B cell (primary cell): ENCODE measurements at regions of chr15 and their contacts with region 1.

Region 1: DNA sequence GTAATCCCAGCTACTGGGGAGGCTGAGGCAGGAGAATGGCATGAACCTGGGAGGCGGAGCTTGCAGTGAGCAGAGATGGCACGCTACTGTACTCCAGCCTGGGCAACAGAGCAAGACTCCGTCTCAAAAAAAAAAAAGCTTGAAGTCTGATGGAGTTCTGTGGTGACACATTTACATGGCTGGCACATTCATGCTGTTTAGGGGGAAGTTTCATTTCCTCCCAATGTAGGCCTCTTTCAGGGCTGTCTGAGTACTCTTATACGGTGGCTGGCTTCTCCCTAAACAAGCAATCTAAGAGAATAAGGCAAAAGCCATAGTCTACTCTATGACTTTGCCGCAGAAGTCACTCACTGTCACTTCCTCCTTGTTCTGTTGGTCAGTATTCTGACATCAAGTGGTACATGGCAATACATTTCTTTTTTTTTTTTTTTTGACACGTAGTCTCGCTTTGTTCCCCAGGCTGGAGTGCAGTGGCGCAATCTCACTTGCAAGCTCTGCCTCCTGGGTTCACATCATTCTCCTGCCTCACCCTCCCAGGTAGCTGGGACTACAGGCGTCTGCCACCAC is 41.2 kb downstream of the OIP5 start:
- DNase-seq: peak; percentile 89
- ATAC-seq: peak; percentile 95
- H3K4me3 ChIP-seq: peak overlapping the region in 1 of 5 experiments; percentile 12
- H3K4me3 Mint-ChIP-seq: peak overlapping the region; percentile 68
- H3K27ac ChIP-seq: peak overlapping the region; percentile 73 to 91
- H3K27ac Mint-ChIP-seq: peak overlapping the region; percentile 93
- H3K4me1 ChIP-seq: peaks cover 24 to 35% of the 10 kb centered on the region in 2 donors
- H3K4me1 Mint-ChIP-seq: peaks cover 45% of the 10 kb centered on the region
- H3K27me3 ChIP-seq: no peaks in the 10 kb centered on the region
- H3K27me3 Mint-ChIP-seq: no peaks in the 10 kb centered on the region
- CTCF ChIP-seq: no peak

Region 2: GRCh38 chr15:41258706-41259471 is 32.3 kb before region 1 on chr15:
- CTCF ChIA-PET with region 1: no interaction called
- POLR2A ChIA-PET with region 1: no interaction called
- intact Hi-C with region 1: loop called (anchors 2 kb)
- DNase-seq: peak; percentile 73
- ATAC-seq: peak; percentile 96
- H3K4me3 ChIP-seq: peak overlapping the region in 2 of 5 experiments; percentile 12 to 13
- H3K4me3 Mint-ChIP-seq: peak overlapping the region; percentile 40
- H3K27ac ChIP-seq: peak overlapping the region; percentile 26 to 59
- H3K27ac Mint-ChIP-seq: peak overlapping the region; percentile 33
- H3K4me1 ChIP-seq: peaks cover 23 to 36% of the 10 kb centered on the region in 2 donors
- H3K4me1 Mint-ChIP-seq: peaks cover 28% of the 10 kb centered on the region
- H3K27me3 ChIP-seq: no peaks in the 10 kb centered on the region
- H3K27me3 Mint-ChIP-seq: no peaks in the 10 kb centered on the region
- CTCF ChIP-seq: no peak

Region 3: DNA sequence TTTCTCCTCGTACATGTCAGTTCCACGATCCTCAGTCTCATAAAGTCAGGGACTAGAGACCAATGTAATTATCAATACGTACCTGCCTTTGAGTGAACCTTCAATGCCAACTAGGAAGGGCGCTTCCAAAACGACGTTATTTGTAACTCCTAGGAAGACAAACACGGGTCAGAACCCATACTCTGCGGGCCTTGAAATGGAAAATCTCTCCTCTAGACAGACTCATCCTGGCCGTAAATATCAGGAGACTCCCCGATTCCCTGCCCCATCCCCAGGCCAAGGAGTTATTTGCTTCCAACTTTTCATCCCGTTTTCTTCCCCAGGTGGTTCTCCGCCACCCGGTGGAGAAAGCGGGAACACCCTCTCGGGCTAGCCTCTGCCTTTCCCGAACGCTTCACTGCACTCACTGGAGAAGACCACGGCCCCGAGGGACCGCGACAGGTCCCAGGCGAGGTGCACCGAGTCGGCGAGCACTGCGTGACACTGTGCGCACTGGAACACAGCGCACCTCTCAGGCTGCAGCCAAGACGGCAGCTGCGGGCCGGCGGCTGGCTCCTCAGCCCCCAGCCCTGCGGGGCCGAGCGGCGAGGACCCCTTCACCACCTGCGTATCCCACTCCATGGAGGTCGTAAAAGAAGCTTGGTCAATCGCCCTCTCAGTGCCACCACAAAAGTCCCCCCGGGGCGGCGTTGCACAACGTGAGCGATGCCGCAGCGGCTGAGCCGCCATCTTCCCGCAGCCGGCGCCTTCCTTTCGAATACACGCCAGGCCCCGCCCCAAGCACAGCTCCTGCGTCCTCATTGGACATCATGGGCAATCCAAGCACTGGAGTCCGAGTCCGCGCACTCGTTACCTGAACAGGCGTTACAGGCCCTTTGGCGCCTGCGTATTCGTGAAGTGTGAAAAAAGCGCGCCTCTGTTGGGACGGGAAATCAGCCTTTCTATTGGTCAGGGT is 41.0 kb after region 1 on chr15 and contains the start of gene OIP5:
- CTCF ChIA-PET with region 1: interaction called, 5 read pairs
- POLR2A ChIA-PET with region 1: no interaction called
- intact Hi-C with region 1: loop called (anchors 2 kb)
- DNase-seq: peak; percentile 98
- ATAC-seq: peak; percentile 94
- H3K4me3 ChIP-seq: peak within 1 kb of the TSS; percentile 84 to 98 (median 89)
- H3K4me3 Mint-ChIP-seq: peak within 1 kb of the TSS; percentile 99
- H3K27ac ChIP-seq: peak within 1 kb of the TSS; percentile 45 to 76
- H3K27ac Mint-ChIP-seq: peak within 1 kb of the TSS; percentile 95
- H3K4me1 ChIP-seq: peaks cover 13 to 19% of the 10 kb centered on the region in 2 donors
- H3K4me1 Mint-ChIP-seq: peaks cover 27% of the 10 kb centered on the region
- H3K27me3 ChIP-seq: no peaks in the 10 kb centered on the region
- H3K27me3 Mint-ChIP-seq: no peaks in the 10 kb centered on the region
- CTCF ChIP-seq: peak; percentile 57
- total RNA-seq, gene OIP5: 0.84 and 2.3 TPM in 2 replicates